B cell (primary cell): ENCODE measurements at regions of chr10 and their contacts with region 1.

Region 1: GRCh38 chr10:96743988-96744585 is 23.8 kb upstream of the PIK3AP1 start:
- DNase-seq: peak; percentile 51
- ATAC-seq: no peak
- H3K4me3 ChIP-seq: peak overlapping the region in 1 of 5 experiments; percentile 3
- H3K4me3 Mint-ChIP-seq: peak overlapping the region; percentile 30
- H3K27ac ChIP-seq: peak overlapping the region; percentile 46 to 74
- H3K27ac Mint-ChIP-seq: peak overlapping the region; percentile 83
- H3K4me1 ChIP-seq: peaks cover 81 to 83% of the 10 kb centered on the region in 2 donors
- H3K4me1 Mint-ChIP-seq: peaks cover 52% of the 10 kb centered on the region
- H3K27me3 ChIP-seq: no peaks in the 10 kb centered on the region
- H3K27me3 Mint-ChIP-seq: no peaks in the 10 kb centered on the region
- CTCF ChIP-seq: no peak

Region 2: GRCh38 chr10:96287392-96288105 is 456.5 kb before region 1 on chr10:
- CTCF ChIA-PET with region 1: no interaction called
- POLR2A ChIA-PET with region 1: no interaction called
- intact Hi-C with region 1: loop called (anchors 10 kb)
- DNase-seq: peak; percentile 83
- ATAC-seq: peak; percentile 76
- H3K4me3 ChIP-seq: peak overlapping the region; percentile 42 to 77 (median 67)
- H3K4me3 Mint-ChIP-seq: peak overlapping the region; percentile 84
- H3K27ac ChIP-seq: peak overlapping the region; percentile 86
- H3K27ac Mint-ChIP-seq: peak overlapping the region; percentile 92
- H3K4me1 ChIP-seq: peaks cover 63 to 64% of the 10 kb centered on the region in 2 donors
- H3K4me1 Mint-ChIP-seq: peaks cover 76% of the 10 kb centered on the region
- H3K27me3 ChIP-seq: no peaks in the 10 kb centered on the region
- H3K27me3 Mint-ChIP-seq: no peaks in the 10 kb centered on the region
- CTCF ChIP-seq: no peak

Region 3: DNA sequence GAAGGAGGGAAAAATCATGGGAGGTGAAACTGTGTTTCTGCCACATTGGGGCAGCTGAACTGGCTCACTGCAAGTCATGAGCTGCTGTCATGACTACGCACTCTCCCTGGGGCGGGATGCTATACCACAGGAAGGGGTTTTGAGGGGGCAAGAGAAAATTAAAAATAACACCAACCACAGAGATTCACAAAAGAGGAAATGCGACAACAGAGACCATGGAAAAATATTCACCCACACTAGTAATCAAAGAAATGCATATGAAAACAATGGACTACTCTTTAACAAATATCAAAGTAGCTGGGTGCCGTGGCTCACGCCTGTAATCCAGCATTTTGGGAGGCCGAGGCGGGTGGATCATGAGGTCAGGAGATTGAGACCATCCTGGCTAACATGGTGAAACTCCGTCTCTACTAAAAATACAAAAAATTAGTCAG is 92.1 kb before region 1 on chr10:
- CTCF ChIA-PET with region 1: interaction called, 7 read pairs
- POLR2A ChIA-PET with region 1: interaction called, 11 read pairs
- intact Hi-C with region 1: no loop called
- DNase-seq: peak; percentile 86
- ATAC-seq: peak; percentile 82
- H3K4me3 ChIP-seq: peak overlapping the region in 1 of 5 experiments; percentile 24
- H3K4me3 Mint-ChIP-seq: peak overlapping the region; percentile 44
- H3K27ac ChIP-seq: peak overlapping the region; percentile 54 to 72
- H3K27ac Mint-ChIP-seq: peak overlapping the region; percentile 86
- H3K4me1 ChIP-seq: peaks cover 49 to 72% of the 10 kb centered on the region in 2 donors
- H3K4me1 Mint-ChIP-seq: peaks cover 79% of the 10 kb centered on the region
- H3K27me3 ChIP-seq: no peaks in the 10 kb centered on the region
- H3K27me3 Mint-ChIP-seq: no peaks in the 10 kb centered on the region
- CTCF ChIP-seq: no peak

Region 4: GRCh38 chr10:96700374-96701099 is 43.5 kb before region 1 on chr10:
- CTCF ChIA-PET with region 1: interaction called, 6 read pairs
- POLR2A ChIA-PET with region 1: interaction called, 7 read pairs
- intact Hi-C with region 1: loop called (anchors 2 kb)
- DNase-seq: peak; percentile 95
- ATAC-seq: peak; percentile 94
- H3K4me3 ChIP-seq: peak overlapping the region; percentile 75 to 97 (median 82)
- H3K4me3 Mint-ChIP-seq: peak overlapping the region; percentile 98
- H3K27ac ChIP-seq: peak overlapping the region; percentile 88 to 92
- H3K27ac Mint-ChIP-seq: peak overlapping the region; percentile 96
- H3K4me1 ChIP-seq: peaks cover 76 to 81% of the 10 kb centered on the region in 2 donors
- H3K4me1 Mint-ChIP-seq: peaks cover 77% of the 10 kb centered on the region
- H3K27me3 ChIP-seq: no peaks in the 10 kb centered on the region
- H3K27me3 Mint-ChIP-seq: no peaks in the 10 kb centered on the region
- CTCF ChIP-seq: no peak

Region 5: DNA sequence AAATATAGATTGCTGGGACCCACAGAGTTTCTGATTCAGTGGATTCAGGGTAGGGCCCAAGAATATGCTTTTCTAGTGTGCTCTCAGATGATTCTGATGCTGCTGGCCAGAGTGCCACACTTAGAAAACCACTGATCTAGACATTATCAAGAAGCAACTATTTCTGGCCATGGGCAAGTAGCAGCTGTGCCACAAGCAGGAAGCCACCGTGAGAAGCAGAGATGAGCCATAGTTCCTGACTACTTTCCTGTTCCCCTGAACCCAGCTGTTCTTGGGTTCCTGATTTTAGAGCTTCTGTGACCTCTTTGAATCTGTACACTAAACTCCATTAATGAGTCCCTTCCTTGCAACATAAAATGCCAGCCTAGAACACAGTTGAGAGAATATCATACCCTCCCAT is 14.3 kb after region 1 on chr10:
- CTCF ChIA-PET with region 1: interaction called, 18 read pairs
- POLR2A ChIA-PET with region 1: interaction called, 3 read pairs
- intact Hi-C with region 1: loop called (anchors 1 kb)
- DNase-seq: peak; percentile 62
- ATAC-seq: peak; percentile 64
- H3K4me3 ChIP-seq: peak overlapping the region in 2 of 5 experiments; percentile 6 to 22
- H3K4me3 Mint-ChIP-seq: peak overlapping the region; percentile 68
- H3K27ac ChIP-seq: peak overlapping the region; percentile 17 to 76
- H3K27ac Mint-ChIP-seq: peak overlapping the region; percentile 86
- H3K4me1 ChIP-seq: peaks cover 47 to 55% of the 10 kb centered on the region in 2 donors
- H3K4me1 Mint-ChIP-seq: peaks cover 60% of the 10 kb centered on the region
- H3K27me3 ChIP-seq: no peaks in the 10 kb centered on the region
- H3K27me3 Mint-ChIP-seq: no peaks in the 10 kb centered on the region
- CTCF ChIP-seq: no peak

Region 6: GRCh38 chr10:96765406-96766240 is 21.5 kb after region 1 on chr10:
- CTCF ChIA-PET with region 1: interaction called, 18 read pairs
- POLR2A ChIA-PET with region 1: no interaction called
- intact Hi-C with region 1: loop called (anchors 1 kb)
- DNase-seq: peak; percentile 83
- ATAC-seq: peak; percentile 74
- H3K4me3 ChIP-seq: no peak overlapping the region
- H3K4me3 Mint-ChIP-seq: peak overlapping the region; percentile 60
- H3K27ac ChIP-seq: peak overlapping the region; percentile 30 to 54
- H3K27ac Mint-ChIP-seq: peak overlapping the region; percentile 77
- H3K4me1 ChIP-seq: peaks cover 33% of the 10 kb centered on the region in 2 donors
- H3K4me1 Mint-ChIP-seq: peaks cover 39% of the 10 kb centered on the region
- H3K27me3 ChIP-seq: no peaks in the 10 kb centered on the region
- H3K27me3 Mint-ChIP-seq: no peaks in the 10 kb centered on the region
- CTCF ChIP-seq: peak; percentile 90